Left cardiac atrium (tissue), 4 donors: ENCODE measurements at regions of chr20 and their contacts with region 1.

Region 1: DNA sequence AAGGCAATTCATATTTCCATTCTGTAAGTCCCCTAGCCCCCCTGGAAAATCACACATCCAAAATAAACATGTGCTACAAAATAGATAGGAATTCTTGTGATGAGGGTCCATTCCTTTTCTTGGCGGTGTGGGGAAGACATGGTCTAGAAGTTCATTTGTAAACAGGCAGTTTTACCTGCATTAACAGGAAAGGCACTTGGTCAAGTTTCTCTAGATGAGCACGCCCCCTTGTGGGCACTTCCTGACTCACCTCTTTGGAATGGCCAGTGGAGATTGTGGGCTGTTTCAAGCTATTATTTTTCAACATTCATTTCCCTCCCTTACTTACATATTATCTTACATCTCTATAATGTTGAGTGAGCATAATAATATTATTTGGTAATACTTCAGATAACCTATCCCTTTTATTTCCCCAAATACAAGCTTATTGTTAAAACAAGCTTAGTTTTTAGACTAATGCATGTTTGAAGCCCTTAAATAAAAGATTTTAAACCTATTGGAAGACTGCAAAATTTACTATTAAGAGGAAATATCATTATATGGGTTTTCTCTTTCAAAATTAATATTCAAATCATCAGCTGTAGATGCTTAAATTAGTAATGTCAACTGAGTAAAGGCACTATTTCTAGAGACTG is 92.1 kb downstream of the TASP1 start:
- DNase-seq: peak; percentile 79
- ATAC-seq: peak in 1 of 2 donors; percentile 49

Region 2: DNA sequence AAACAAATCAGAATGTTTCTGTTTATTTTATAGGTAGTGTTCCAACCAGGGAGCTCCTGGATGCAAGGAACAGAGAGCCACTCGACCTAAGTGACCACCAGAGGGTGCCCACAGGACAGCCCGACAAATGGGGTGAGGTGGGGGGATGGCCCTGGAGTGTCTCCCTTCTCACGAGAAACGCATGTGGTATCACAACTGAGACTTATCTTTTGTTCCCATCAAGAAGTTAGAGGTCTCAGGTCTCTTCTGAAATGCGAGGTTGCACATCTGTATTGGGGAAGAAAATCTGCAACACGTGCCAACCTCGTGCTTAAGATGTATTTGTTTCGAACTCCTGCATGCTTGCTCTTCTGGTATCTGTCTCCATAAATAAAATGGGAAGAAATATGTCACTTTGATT is 221.6 kb before region 1 on chr20:
- intact Hi-C with region 1: loop called in 1 of 2 experiments (anchors 2 kb)
- DNase-seq: no peak
- ATAC-seq: no peak

Region 3: GRCh38 chr20:13464702-13465101 is 81.9 kb before region 1 on chr20:
- intact Hi-C with region 1: loop called in 1 of 2 experiments (anchors 5 kb)
- DNase-seq: no peak
- ATAC-seq: no peak